Head of caudate nucleus (tissue), 42 donors: ENCODE measurements at regions of chrX and their contacts with region 1.

Region 1: DNA sequence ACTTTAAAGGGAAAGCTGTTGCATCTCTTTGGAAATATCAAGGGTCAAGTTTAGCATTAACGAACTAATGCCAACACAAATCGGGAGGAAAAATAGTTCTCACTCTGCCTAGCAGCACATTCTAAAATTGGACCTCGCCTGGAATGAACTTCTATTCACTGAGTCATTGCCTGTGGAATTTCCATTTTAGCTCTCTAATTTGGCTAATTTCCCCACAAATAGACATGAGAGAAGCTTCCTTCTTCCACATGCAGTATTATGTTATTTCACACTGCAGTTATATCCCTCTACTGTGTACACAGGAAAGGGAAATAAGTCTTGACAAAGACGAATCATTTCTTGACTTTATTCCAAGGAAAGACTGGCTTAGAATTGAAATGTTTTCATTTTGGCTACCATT is 9.3 kb downstream of the ZXDA start:
- DNase-seq: peak in 2 of 42 donors; percentile 11 to 57

Region 2: GRCh38 chrX:57595381-57595811 is 305.6 kb before region 1 on chrX:
- intact Hi-C with region 1: loop called (anchors 10 kb)
- DNase-seq: no peak

Region 3: DNA sequence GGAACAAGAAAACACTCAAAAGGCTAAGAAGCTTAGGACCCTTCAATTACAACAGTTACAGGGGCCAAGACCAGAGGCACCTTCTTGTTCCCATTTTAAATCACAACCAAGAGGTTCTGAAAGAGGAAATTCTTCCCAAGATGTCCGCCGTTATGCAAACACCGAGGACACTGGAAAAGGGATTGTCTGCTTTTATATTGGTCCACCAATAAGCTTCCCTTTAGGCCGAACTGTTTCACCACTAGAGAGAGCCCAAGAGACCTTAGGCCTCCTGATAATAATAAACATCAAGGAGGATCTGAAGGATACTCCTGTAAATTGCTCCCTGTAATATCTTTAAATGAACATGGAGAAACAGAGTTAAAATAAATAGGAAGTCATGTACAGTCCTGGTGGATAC is 128.3 kb before region 1 on chrX:
- intact Hi-C with region 1: no loop called
- DNase-seq: no peak

Region 4: DNA sequence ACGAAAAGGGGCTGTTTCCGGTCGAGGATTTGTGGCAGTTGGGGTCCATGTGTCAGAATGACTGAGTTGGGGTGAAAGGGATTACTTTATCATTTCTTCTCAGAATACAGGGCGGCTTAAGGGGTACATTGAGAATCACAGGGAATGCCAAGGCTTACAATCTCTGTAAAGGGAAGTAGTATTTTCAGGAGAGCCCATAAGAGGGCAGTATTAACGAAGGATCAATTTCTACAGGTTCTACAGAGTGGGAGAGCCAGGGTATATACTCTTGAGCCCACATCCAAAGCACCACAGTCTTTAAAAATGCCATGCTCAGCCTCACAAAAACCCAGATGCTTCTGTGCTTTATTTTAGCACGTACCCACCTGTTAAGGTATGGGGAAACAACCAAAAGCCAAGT is 77.0 kb after region 1 on chrX:
- intact Hi-C with region 1: no loop called
- DNase-seq: no peak